A549 (cell line): ENCODE measurements at regions of chr21 and their contacts with region 1.

Region 1: DNA sequence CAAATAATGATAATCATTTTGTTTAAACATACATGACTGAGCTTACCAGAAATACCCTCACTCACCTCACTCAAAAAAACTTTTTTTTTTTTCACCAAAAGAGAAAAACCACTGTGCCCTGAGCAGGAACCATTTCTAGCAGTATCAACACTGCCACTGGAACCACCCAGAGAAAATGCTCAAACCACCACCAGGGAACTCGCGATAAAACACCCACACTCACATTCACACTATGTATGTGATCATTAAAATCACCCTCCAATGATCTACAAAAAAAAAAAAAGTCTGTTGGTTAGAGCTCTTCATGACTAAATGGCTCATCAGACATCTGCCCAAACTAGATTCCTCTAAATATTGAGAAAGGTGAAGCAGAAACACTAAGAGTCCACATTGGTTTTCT is 11.5 kb downstream of the TIAM1 start:
- DNase-seq: no peak
- ATAC-seq: no peak
- H3K4me3 ChIP-seq: no peak overlapping the region
- H3K27ac ChIP-seq: no peak overlapping the region
- H3K4me1 ChIP-seq: no peaks in the 10 kb centered on the region
- CTCF ChIP-seq: no peak
- EP300 ChIP-seq: no peak
- POLR2A ChIP-seq: no peak
- RAD21 ChIP-seq: no peak

Region 2: DNA sequence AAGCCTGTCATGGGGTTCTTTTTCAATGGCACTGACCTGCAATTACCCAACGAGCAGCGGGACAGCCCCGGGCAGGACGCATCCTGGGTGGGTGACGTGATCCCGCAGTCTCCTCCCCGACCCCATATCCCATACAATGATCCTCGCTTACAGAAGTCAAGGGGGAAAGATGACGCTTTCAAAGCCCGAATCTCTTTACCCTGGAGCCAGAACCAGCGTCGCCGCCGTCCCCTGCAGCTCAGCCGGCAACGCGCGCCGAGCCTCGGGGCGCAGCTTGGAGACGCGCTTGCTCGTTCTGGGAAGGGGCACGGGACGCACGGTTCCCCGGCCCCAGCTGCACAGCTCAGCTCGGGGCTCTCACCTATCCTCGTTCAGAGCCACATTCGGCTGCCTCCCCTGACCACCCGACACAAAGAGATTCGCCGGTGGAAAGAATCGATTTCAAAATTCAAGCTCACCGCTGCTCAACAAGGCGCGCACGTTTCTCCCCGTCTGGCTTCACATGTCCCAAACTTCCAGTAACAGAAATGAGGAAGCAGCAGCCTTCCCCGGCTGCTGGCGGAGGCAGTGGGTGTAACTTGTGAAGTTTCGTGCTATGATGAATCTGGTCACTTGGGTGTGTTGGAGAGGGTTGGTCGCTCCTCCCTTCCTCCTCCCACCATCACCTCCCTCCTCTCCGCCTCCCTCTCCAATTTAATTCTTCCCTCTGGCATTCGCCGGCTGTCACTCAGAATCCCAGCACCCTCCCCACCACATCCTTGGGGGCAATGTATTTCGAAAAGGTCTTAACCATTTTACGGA is 11.4 kb after region 1 on chr21 and contains the start of gene TIAM1:
- CTCF ChIA-PET with region 1: interaction called, 16 read pairs
- POLR2A ChIA-PET with region 1: no interaction called
- DNase-seq: peak in 1 of 2 experiments; percentile 4
- ATAC-seq: no peak
- H3K4me3 ChIP-seq: no peak within 1 kb of the TSS
- H3K27ac ChIP-seq: no peak within 1 kb of the TSS
- H3K4me1 ChIP-seq: no peaks in the 10 kb centered on the region
- CTCF ChIP-seq: no peak
- EP300 ChIP-seq: no peak
- POLR2A ChIP-seq: no peak
- RAD21 ChIP-seq: no peak
- polyA plus RNA-seq, gene TIAM1: 0.26 and 0.40 TPM in 2 replicates

Region 3: GRCh38 chr21:31473685-31474345 is 141.3 kb after region 1 on chr21:
- CTCF ChIA-PET with region 1: no interaction called
- POLR2A ChIA-PET with region 1: no interaction called
- DNase-seq: no peak
- ATAC-seq: no peak
- H3K4me3 ChIP-seq: no peak overlapping the region
- H3K27ac ChIP-seq: no peak overlapping the region
- H3K4me1 ChIP-seq: no peaks in the 10 kb centered on the region
- CTCF ChIP-seq: no peak
- EP300 ChIP-seq: no peak
- POLR2A ChIP-seq: no peak
- RAD21 ChIP-seq: no peak